ENCODE measurements at regions of chr7 and their contacts with region 1.

Region 1: DNA sequence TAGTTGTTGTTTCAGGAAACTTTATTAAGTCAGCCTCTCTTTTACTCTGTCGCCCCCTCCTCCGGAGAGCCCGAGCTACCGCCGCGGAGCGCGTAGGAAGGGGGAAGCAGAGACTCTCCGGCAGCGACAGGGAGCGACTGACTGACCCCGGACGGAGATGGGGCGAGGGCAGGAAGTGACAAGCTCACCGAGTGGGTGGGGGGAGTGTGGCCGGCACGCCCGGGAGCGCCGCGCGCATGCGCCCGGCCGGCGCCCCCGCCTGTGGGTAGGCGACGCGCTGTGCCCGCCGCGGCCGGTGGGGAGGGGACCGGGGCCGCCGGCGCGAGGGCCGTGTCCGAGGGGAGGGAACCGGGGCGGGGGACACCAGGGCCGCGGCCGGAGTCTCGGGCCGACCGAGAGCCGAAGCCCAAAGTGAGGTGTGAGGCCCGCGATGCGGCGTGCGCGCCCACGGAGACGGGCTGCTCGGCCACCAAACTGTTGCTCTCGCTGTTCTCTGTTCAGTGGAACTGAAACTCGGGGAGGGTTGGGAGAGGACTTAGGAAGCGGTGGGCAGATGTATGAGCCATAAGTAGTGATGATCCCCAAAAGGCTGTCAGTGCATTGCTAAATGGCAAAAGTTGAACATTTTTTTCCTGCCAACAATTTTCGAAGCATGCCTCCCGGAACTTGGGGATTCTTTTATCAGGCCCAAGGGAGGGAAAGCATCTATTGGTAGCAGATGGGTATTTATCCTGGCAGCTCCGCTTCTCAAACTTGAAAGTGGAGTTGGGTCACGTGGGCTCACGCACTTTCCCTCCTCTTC is at the start of gene ZNF800:
- DNase-seq: peak; percentile 92 to 96 (median 96)
- ATAC-seq: peak; percentile 99 to 100
- H3K4me3 ChIP-seq: peak within 1 kb of the TSS; percentile 83
- H3K27ac ChIP-seq: peak within 1 kb of the TSS; percentile 85
- H3K4me1 ChIP-seq: no peaks in the 10 kb centered on the region
- H3K27me3 ChIP-seq: no peaks in the 10 kb centered on the region
- total RNA-seq, gene ZNF800: 24.3 to 29.3 (median 26.8) TPM

Region 2: GRCh38 chr7:127536741-127537140 is 144.0 kb after region 1 on chr7:
- intact Hi-C with region 1: no loop called
- DNase-seq: no peak
- ATAC-seq: no peak
- H3K4me3 ChIP-seq: no peak overlapping the region
- H3K27ac ChIP-seq: no peak overlapping the region
- H3K4me1 ChIP-seq: no peaks in the 10 kb centered on the region
- H3K27me3 ChIP-seq: peaks cover 3% of the 10 kb centered on the region

Region 3: GRCh38 chr7:127582361-127582760 is 189.6 kb after region 1 on chr7:
- intact Hi-C with region 1: loop called in 1 of 4 experiments (anchors 5 kb)
- DNase-seq: peak; percentile 70 to 91 (median 89)
- ATAC-seq: peak in 1 of 2 donors; percentile 13
- H3K4me3 ChIP-seq: no peak overlapping the region
- H3K27ac ChIP-seq: no peak overlapping the region
- H3K4me1 ChIP-seq: peaks cover 18% of the 10 kb centered on the region
- H3K27me3 ChIP-seq: no peaks in the 10 kb centered on the region

Measured in right cardiac atrium (tissue), 5 donors.